ENCODE measurements at regions of chr12 and their contacts with region 1.

Region 1: DNA sequence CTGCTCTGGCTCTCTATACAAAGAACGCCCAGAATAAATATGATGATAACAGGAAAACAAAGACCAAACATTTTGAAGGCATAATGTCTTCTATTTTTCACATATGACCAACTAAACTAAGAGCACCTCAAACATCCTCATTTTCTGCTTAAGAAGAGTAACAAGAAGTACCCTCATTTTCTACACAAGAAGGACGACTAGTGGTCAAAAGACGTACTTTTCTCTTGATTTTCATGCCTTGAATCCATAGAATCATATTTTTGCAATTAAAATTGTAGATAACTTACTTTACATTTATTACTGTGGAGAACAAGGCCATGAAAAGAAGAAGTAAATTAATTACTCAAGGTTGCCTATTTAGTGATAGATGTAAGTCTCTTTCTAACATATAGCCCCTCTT is 358.6 kb downstream of the DUSP6 start:
- DNase-seq: no peak
- ATAC-seq: peak in 1 of 4 donors; percentile 30
- H3K4me3 ChIP-seq: no peak overlapping the region
- H3K27ac ChIP-seq: no peak overlapping the region
- H3K4me1 ChIP-seq: peaks cover 0 to 5% (median 0%) of the 10 kb centered on the region in 12 donors
- H3K27me3 ChIP-seq: no peaks in the 10 kb centered on the region
- CTCF ChIP-seq: peak; percentile 35 to 73 (median 60)
- POLR2A ChIP-seq: no peak

Region 2: DNA sequence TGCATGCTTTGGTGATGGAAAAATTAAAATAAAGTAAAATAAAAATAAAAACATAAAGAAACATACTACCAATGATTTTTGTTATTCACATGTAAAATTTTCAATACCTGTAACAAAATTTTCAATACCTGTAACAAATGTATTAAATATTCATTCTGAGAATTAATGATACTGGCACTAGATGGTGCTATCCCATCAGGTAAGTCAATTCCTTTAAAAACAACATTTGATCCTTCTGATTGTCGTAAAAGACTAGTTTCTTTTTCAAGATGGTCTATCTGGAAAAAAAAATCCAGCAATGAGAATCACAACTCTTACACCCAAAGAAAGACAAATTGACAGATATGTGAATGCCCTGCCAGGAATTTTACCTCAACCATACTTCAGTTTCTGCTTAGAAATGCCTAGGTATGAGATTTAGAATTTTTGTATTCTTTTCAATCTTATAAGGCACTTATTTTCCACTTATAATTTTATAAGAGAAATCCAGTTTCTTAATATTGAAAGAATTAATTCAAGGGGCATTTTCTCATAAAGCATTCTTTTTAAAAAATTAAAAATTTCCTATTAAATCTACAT is 882.5 kb before region 1 on chr12:
- intact Hi-C with region 1: loop called in 6 of 10 experiments (anchors 5 to 10 kb)
- DNase-seq: no peak
- ATAC-seq: no peak
- H3K4me3 ChIP-seq: peak overlapping the region in 6 of 12 donors; percentile 14 to 38 (median 20)
- H3K27ac ChIP-seq: no peak overlapping the region
- H3K4me1 ChIP-seq: no peaks in the 10 kb centered on the region
- H3K27me3 ChIP-seq: no peaks in the 10 kb centered on the region
- CTCF ChIP-seq: peak; percentile 10 to 60 (median 38)
- POLR2A ChIP-seq: no peak

Region 3: GRCh38 chr12:88141770-88142609 is 851.7 kb before region 1 on chr12 and contains the starts of genes CEP290 and TMTC3:
- intact Hi-C with region 1: loop called in 1 of 10 experiments (anchors 10 kb)
- DNase-seq: peak; percentile 94 to 96 (median 96)
- ATAC-seq: peak; percentile 99
- H3K4me3 ChIP-seq: peak within 1 kb of the TSS; percentile 67 to 92 (median 76)
- H3K27ac ChIP-seq: peak within 1 kb of the TSS in 11 of 12 donors; percentile 59 to 86 (median 77)
- H3K4me1 ChIP-seq: peaks cover 0 to 34% (median 13%) of the 10 kb centered on the region in 12 donors
- H3K27me3 ChIP-seq: no peaks in the 10 kb centered on the region
- CTCF ChIP-seq: no peak
- POLR2A ChIP-seq: peak in 1 of 2 donors; percentile 67
- total RNA-seq, gene CEP290: 6.0 to 11.1 (median 7.7) TPM
- total RNA-seq, gene TMTC3: 7.5 to 13.8 (median 9.8) TPM

Region 4: GRCh38 chr12:88153959-88154358 is 839.7 kb before region 1 on chr12:
- intact Hi-C with region 1: loop called in 7 of 10 experiments (anchors 2 to 10 kb)
- DNase-seq: no peak
- ATAC-seq: no peak
- H3K4me3 ChIP-seq: no peak overlapping the region
- H3K27ac ChIP-seq: no peak overlapping the region
- H3K4me1 ChIP-seq: no peaks in the 10 kb centered on the region
- H3K27me3 ChIP-seq: no peaks in the 10 kb centered on the region
- CTCF ChIP-seq: peak in 10 of 12 donors; percentile 14 to 61 (median 34)
- POLR2A ChIP-seq: no peak

Region 5: GRCh38 chr12:88471331-88472045 is 522.2 kb before region 1 on chr12:
- intact Hi-C with region 1: no loop called
- DNase-seq: peak in 1 of 5 donors; percentile 32
- ATAC-seq: peak in 2 of 4 donors; percentile 74 to 87
- H3K4me3 ChIP-seq: no peak overlapping the region
- H3K27ac ChIP-seq: no peak overlapping the region
- H3K4me1 ChIP-seq: peaks cover 0 to 8% (median 0%) of the 10 kb centered on the region in 12 donors
- H3K27me3 ChIP-seq: no peaks in the 10 kb centered on the region
- CTCF ChIP-seq: no peak
- POLR2A ChIP-seq: no peak

Region 6: DNA sequence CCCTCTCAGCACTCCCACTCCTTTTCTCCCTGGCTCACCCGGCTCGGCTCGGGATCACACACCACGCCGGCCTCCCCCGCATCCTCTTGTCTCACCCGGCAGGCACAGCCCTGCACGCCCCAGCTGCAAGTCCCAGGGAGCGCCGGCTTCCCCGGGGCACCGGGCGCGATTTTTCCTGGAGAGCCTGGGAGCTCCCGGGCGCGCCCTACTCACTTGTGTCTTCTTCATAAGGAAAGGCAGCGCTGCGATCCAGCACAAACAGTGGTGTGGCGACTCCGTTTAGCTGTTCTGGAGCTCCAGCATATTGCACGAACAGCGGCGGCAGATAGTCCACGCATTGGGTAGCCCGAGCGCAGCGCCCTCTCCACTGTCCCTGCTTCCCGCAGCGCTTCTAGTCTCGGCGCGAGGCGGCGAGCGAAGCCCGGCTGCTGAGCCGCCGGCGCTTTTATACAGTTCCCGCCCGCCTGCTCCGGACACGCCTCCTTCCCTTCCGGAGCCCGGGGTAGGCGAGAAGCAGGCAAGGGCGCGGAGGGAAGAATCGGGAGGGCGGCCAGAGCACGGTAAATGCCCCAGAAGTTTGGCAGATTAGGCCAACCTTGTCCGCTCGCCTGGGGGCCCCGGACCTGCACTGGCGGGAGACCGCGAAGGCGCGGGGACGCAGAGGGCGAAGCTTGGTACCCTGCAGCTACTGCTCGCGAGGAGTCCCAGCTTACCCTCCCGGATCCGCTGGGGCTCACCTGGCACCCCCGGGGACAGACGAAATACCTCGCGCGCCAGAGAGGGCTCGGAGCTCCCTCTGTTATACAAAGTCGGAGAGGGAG is 413.4 kb before region 1 on chr12 and contains the start of gene KITLG:
- intact Hi-C with region 1: loop called in 8 of 10 experiments (anchors 5 to 10 kb)
- DNase-seq: peak; percentile 81 to 91 (median 86)
- ATAC-seq: peak; percentile 88 to 97 (median 96)
- H3K4me3 ChIP-seq: peak within 1 kb of the TSS; percentile 41 to 85 (median 72)
- H3K27ac ChIP-seq: peak within 1 kb of the TSS; percentile 59 to 88 (median 80)
- H3K4me1 ChIP-seq: peaks cover 0 to 33% (median 5%) of the 10 kb centered on the region in 12 donors
- H3K27me3 ChIP-seq: peaks cover 0 to 25% (median 0%) of the 10 kb centered on the region in 9 donors
- CTCF ChIP-seq: peak in 11 of 12 donors; percentile 15 to 63 (median 37)
- POLR2A ChIP-seq: peak in 1 of 2 donors; percentile 60
- total RNA-seq, gene KITLG: 6.0 to 15.3 (median 10.2) TPM

Region 7: DNA sequence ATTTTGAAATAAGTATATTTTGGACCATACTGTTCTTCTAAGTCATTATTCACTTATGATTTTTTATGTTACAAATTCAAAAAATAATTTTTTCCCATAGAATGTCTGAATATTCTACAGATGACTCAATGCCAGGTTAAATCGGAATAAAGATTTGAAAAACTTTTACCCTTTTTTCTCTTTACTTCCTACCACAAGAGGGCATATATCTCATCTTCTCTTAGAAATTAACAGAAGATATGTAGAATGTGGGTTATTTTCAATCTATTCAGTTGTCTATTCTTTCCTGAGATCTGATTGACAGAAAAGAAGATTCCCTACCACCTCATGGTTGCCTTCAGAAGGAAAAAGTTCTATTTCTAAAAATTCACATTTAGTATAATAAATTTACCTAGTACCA is 360.3 kb before region 1 on chr12:
- intact Hi-C with region 1: loop called in 2 of 10 experiments (anchors 5 to 10 kb)
- DNase-seq: no peak
- ATAC-seq: no peak
- H3K4me3 ChIP-seq: no peak overlapping the region
- H3K27ac ChIP-seq: no peak overlapping the region
- H3K4me1 ChIP-seq: peaks cover 0 to 4% (median 0%) of the 10 kb centered on the region in 12 donors
- H3K27me3 ChIP-seq: no peaks in the 10 kb centered on the region
- CTCF ChIP-seq: peak in 6 of 12 donors; percentile 12 to 39 (median 30)
- POLR2A ChIP-seq: no peak

Region 8: GRCh38 chr12:88638966-88639760 is 354.5 kb before region 1 on chr12:
- intact Hi-C with region 1: loop called in 2 of 10 experiments (anchors 5 to 10 kb)
- DNase-seq: no peak
- ATAC-seq: peak in 3 of 4 donors; percentile 66 to 85 (median 85)
- H3K4me3 ChIP-seq: no peak overlapping the region
- H3K27ac ChIP-seq: peak overlapping the region in 10 of 12 donors; percentile 7 to 78 (median 68)
- H3K4me1 ChIP-seq: peaks cover 0 to 19% (median 7%) of the 10 kb centered on the region in 12 donors
- H3K27me3 ChIP-seq: no peaks in the 10 kb centered on the region
- CTCF ChIP-seq: no peak
- POLR2A ChIP-seq: no peak

Region 9: DNA sequence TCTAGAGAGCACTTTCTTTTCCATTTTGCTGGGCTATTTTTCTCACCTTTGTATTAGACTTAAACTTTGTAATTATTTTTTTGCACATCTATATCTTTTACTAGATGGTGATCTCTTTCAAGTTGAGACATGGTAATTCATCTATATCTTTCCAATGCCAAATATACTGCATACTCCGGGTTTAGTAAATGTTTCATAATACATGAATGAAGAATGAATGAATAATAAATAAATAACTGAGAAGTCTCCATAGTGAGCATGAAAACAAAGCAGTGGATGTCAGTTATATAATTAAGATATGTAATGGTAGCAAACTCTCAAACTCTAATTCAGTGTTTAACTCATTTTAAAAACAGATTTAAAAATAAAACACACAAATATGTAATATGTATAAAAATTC is 70.8 kb before region 1 on chr12:
- intact Hi-C with region 1: no loop called
- DNase-seq: no peak
- ATAC-seq: no peak
- H3K4me3 ChIP-seq: no peak overlapping the region
- H3K27ac ChIP-seq: no peak overlapping the region
- H3K4me1 ChIP-seq: peaks cover 0 to 5% (median 0%) of the 10 kb centered on the region in 12 donors
- H3K27me3 ChIP-seq: no peaks in the 10 kb centered on the region
- CTCF ChIP-seq: no peak
- POLR2A ChIP-seq: no peak

Region 10: DNA sequence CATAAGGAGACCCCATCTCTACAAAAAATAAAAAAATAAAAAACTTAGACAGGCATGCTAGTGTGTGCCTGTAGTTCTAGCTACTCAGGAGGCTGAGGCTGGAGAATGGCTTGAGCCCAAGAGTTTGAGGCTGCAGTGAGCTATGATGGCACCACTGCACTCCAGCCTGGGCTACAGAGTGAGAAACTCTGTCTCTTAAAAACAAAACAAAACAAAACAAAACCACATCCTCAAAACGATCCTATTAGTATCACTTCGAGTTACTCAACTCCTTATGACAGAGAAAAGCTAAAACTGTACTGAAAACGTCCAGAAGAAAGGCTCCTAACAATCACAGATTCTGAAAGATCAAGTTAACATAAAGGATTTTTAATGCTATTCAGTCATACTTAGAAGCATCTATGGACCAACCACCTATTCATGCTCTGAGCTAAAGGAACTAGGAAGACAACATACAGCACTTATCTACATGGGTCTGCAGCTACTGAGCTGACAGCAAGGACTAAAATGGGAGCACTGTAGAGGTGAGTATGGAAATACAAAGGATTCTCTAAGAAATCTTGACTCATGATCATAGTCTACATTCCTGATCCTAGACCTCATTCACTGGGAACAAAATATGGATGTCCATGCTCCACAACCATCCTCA is 434.0 kb after region 1 on chr12:
- intact Hi-C with region 1: no loop called
- DNase-seq: no peak
- ATAC-seq: peak in 1 of 4 donors; percentile 26
- H3K4me3 ChIP-seq: no peak overlapping the region
- H3K27ac ChIP-seq: peak overlapping the region in 1 of 12 donors; percentile 72
- H3K4me1 ChIP-seq: peaks cover 0 to 22% (median 0%) of the 10 kb centered on the region in 12 donors
- H3K27me3 ChIP-seq: no peaks in the 10 kb centered on the region
- CTCF ChIP-seq: no peak
- POLR2A ChIP-seq: no peak

Measured in heart left ventricle (tissue), 16 donors.